Activated CD4-positive, alpha-beta memory T cell treated with anti-CD3 and anti-CD28 coated beads, Interleukin-2, amount 10 ng/mL, durations not matched to agents 7 days and 5 days (primary cell): ENCODE measurements at regions of chr6 and their contacts with region 1.

Region 1: GRCh38 chr6:44338228-44339122 is 4.0 kb upstream of the SPATS1 start:
- DNase-seq: peak; percentile 73
- H3K4me3 Mint-ChIP-seq: no peak overlapping the region
- H3K27ac Mint-ChIP-seq: no peak overlapping the region
- H3K4me1 Mint-ChIP-seq: no peaks in the 10 kb centered on the region
- H3K27me3 Mint-ChIP-seq: peaks cover 27% of the 10 kb centered on the region

Region 2: DNA sequence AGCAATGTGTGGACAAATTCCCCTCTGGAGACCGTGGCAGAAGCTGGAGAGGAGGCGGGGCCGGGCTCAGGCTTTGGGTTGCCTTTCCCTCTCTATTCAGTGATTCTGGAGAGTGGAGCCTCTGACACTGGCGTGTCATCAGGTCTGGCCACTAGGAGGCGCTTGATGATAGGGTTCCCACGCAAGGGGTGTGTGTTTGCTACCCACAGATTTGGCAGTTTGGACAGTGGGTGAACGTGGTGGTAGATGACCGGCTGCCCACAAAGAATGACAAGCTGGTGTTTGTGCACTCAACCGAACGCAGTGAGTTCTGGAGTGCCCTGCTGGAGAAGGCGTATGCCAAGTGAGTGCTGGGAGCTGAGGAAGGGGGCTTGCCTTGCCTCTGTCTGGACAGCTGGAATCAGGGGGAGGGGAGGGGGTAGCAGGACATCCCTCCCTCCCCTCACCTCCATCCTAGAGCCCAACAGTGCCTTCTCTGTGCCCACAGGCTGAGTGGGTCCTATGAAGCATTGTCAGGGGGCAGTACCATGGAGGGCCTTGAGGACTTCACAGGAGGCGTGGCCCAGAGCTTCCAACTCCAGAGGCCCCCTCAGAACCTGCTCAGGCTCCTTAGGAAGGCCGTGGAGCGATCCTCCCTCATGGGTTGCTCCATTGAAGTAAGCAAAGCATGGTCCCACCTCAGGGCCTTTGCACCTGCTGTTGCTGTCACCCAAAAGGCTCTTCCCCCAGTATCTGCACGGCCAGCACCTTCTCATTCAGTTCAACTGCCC is 165.6 kb before region 1 on chr6:
- CTCF ChIA-PET with region 1: interaction called, 10 read pairs
- POLR2A ChIA-PET with region 1: no interaction called
- DNase-seq: peak; percentile 81
- H3K4me3 Mint-ChIP-seq: no peak overlapping the region
- H3K27ac Mint-ChIP-seq: no peak overlapping the region
- H3K4me1 Mint-ChIP-seq: peaks cover 17% of the 10 kb centered on the region
- H3K27me3 Mint-ChIP-seq: peaks cover 28% of the 10 kb centered on the region

Region 3: DNA sequence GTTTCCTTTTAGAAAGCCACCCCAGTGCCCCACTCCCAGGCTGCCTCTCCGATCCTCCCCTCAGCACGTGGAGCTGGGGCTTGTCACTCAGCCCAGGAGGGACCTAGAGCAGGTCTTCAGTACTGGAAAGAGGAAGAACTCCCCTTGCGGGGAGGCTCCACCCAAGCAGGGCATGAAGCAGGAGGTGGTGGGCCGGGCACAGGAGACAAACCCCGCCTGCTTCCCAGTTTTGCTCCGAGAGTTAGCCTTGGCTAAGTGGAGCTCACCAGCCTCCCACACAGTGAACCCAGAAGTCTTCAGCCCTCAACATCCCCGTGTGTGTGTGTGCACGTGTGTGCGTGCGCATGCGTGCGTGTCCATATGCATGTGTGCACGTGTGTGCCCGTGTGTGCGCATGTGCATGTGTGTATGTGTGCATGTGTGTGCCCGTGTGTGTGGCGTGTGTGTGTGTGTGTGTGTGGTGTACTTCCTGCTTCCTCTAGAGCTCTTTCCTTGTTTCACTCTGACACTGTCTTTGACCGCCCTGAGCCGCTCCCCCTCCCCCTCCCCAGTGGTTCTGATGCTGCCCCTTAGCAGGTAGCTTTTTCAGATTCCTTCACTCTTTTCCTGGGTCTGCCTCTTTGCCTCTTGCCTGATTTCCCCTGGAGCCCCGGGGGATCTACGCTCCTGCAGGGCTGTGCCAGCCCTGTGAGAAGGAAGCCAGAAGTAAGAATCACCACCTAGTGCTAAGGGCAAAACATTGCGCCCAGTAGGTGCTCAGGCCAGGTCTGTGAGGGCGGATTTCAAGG is 288.8 kb after region 1 on chr6:
- CTCF ChIA-PET with region 1: no interaction called
- POLR2A ChIA-PET with region 1: no interaction called
- DNase-seq: peak; percentile 25
- H3K4me3 Mint-ChIP-seq: no peak overlapping the region
- H3K27ac Mint-ChIP-seq: no peak overlapping the region
- H3K4me1 Mint-ChIP-seq: peaks cover 24% of the 10 kb centered on the region
- H3K27me3 Mint-ChIP-seq: peaks cover 3% of the 10 kb centered on the region